Adrenal gland (tissue), 19 donors: ENCODE measurements at regions of chr11 and their contacts with region 1.

Region 1: DNA sequence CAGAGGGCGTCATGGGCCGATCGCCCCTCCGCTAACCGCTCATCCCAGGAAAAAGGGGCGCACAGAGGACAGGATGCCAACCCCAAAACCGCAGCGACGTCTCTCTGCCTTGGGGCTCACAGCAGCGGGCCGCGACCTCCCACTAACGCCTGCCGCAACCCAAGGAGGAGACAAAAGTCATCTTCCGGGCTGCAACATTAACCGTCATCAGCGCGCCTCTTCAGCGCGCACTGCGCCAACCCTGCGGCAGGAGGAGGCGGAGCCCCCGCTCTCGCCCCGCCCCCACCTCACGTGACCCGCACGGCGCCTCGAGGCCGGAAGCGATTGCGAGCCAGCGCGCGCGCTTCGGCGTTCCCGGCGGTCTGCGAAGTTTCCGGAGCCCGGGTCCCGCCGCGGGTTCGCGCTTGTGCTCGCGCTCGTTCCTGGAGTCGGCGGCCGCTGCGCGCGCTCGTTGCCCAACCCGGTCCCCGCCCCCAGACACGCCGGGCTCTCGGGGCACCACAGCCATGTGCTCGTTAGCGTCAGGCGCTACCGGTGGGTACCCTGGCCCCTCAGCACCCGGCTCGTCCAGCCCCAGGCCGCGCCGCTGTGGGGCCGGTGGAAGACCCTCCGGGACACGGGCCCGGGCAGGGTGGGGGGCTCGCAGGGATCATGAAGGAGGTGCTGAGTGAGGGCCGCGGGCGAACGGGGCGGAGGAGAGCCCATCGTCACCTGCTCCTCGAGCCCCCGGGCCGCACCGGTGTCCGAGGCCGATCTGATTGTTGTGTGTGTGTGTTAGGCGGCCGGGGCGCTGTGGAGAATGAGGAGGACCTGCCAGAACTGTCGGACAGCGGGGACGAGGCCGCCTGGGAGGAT is at the start of gene PRMT3:
- DNase-seq: peak; percentile 93 to 97 (median 96)
- H3K4me3 ChIP-seq: peak within 1 kb of the TSS; percentile 36 to 90 (median 74)
- H3K27ac ChIP-seq: peak within 1 kb of the TSS in 4 of 5 donors; percentile 78 to 95 (median 88)
- H3K4me1 ChIP-seq: peaks cover 8 to 11% of the 10 kb centered on the region in 2 donors
- H3K27me3 ChIP-seq: no peaks in the 10 kb centered on the region
- CTCF ChIP-seq: peak; percentile 87 to 100 (median 98)
- POLR2A ChIP-seq: peak; percentile 78 to 80
- total RNA-seq, gene PRMT3: 11.4 to 23.4 (median 16.1) TPM

Region 2: GRCh38 chr11:20443596-20443995 is 56.1 kb after region 1 on chr11:
- intact Hi-C with region 1: loop called in 1 of 2 experiments (anchors 10 kb)
- DNase-seq: no peak
- H3K4me3 ChIP-seq: no peak overlapping the region
- H3K27ac ChIP-seq: no peak overlapping the region
- H3K4me1 ChIP-seq: no peaks in the 10 kb centered on the region
- H3K27me3 ChIP-seq: no peaks in the 10 kb centered on the region
- CTCF ChIP-seq: peak in 5 of 6 experiments; percentile 9 to 46 (median 36)
- POLR2A ChIP-seq: no peak

Region 3: DNA sequence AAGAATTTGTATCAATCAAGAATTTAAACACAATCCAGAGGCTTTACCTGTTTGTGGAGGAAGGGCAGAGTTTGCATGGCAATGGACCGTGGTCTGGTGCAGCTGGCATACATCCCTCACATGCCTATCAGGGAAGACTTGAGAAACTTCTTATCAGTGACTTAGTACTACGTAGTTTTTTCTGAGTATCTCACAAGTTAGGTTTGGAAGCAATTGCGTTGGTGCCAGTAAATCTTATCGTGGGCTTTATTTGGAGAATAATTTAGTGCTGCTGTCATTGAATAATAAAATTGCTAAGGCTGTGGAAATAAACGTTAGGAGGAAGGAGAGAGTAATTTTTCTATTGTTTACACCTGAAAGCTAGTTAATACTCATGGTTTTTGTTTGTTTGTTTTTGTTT is 72.4 kb after region 1 on chr11:
- intact Hi-C with region 1: no loop called
- DNase-seq: peak in 2 of 7 donors; percentile 29 to 37
- H3K4me3 ChIP-seq: no peak overlapping the region
- H3K27ac ChIP-seq: no peak overlapping the region
- H3K4me1 ChIP-seq: peaks cover 0 to 8% of the 10 kb centered on the region in 2 donors
- H3K27me3 ChIP-seq: no peaks in the 10 kb centered on the region
- CTCF ChIP-seq: no peak
- POLR2A ChIP-seq: no peak